Motor neuron (in vitro differentiated cells): ENCODE measurements at regions of chr16 and their contacts with region 1.

Region 1: DNA sequence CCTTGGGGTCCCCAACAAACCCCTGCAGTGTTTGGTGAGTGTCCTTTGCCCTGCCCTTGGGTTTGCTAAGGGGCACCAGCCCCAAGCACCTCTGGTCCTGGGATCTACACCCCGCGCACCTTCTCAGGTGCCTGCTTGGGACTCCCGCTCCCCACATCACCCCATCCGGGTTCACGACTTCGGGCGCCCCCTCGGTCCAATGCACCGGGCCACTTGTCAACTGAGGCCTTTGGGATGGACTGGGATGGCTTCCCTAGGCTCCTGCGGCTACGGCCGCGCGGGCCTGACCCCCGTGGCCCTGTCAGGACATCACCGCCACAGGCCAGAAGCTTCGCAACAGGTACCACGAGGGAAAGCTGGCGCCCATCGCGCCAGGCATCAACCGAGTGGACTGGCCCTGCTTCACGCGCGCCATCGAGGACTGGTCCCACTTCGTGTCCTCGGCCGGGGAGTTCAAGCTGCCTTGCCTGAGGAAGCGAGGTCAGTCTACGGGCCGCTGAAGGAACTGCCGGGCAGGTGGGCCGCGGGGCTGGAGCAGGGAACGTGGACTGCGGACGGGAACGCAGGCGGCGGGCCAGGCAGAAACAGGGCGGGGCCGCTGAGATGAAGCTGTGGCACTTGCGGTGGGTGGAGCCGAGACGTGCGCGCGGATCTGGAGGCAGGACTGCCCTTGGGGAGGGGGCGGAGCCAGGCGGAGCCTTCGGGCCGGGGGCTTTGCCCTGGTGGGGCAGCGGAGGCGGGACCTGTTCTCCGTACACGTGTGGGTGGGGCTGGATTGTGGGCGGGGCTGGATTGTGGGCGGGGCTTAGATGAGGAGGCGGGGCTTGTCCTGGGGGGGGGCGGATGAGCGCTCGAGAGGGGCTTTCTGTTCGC is 13.6 kb upstream of the CNGB1 start:
- ATAC-seq: peak; percentile 76 to 97 (median 95)
- H3K4me3 ChIP-seq: peak overlapping the region; percentile 39 to 74 (median 48)
- H3K27ac ChIP-seq: no peak overlapping the region
- H3K4me1 ChIP-seq: peaks cover 0 to 4% of the 10 kb centered on the region in 2 donors

Region 2: GRCh38 chr16:57757326-57757786 is 227.2 kb before region 1 on chr16:
- in situ Hi-C with region 1: loop called in 1 of 9 experiments (anchors 25 kb)
- ATAC-seq: peak; percentile 66 to 98 (median 78)
- H3K4me3 ChIP-seq: no peak overlapping the region
- H3K27ac ChIP-seq: no peak overlapping the region
- H3K4me1 ChIP-seq: no peaks in the 10 kb centered on the region

Region 3: DNA sequence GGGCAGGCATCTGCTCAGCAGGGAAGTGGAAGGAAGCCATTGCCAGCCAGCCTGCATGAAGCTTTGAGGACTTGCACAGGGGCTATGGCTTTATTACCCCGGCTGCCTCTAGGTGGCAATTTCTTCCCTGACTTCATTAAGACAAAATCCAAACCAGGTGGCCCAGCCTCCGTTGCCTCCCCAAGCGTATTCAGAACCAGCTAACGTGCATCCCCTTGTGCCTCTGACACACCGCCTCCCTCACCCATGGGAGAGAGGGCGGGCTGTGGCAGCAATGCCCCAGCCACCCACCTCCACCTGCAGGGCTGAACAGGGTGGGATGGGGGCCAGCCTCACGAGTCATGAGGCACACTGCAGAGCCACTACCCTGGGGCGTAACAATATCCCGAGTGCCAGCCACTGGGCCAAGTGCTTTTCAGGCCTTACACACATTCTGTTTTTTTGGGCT is 189.1 kb before region 1 on chr16:
- in situ Hi-C with region 1: loop called in 2 of 9 experiments (anchors 25 kb)
- ATAC-seq: peak in 5 of 8 experiments; percentile 18 to 77 (median 48)
- H3K4me3 ChIP-seq: no peak overlapping the region
- H3K27ac ChIP-seq: no peak overlapping the region
- H3K4me1 ChIP-seq: peaks cover 0 to 22% of the 10 kb centered on the region in 2 donors

Region 4: GRCh38 chr16:57899771-57900661 is 84.6 kb before region 1 on chr16:
- in situ Hi-C with region 1: loop called in 1 of 9 experiments (anchors 25 kb)
- ATAC-seq: peak; percentile 61 to 91 (median 78)
- H3K4me3 ChIP-seq: no peak overlapping the region
- H3K27ac ChIP-seq: no peak overlapping the region
- H3K4me1 ChIP-seq: no peaks in the 10 kb centered on the region